Right ventricle myocardium superior (tissue), 1 donor: ENCODE measurements at regions of chr1 and their contacts with region 1.

Region 1: GRCh38 chr1:153677718-153678505 is 576 bp upstream of the NPR1 start:
- DNase-seq: peak; percentile 67
- ATAC-seq: peak; percentile 80

Region 2: DNA sequence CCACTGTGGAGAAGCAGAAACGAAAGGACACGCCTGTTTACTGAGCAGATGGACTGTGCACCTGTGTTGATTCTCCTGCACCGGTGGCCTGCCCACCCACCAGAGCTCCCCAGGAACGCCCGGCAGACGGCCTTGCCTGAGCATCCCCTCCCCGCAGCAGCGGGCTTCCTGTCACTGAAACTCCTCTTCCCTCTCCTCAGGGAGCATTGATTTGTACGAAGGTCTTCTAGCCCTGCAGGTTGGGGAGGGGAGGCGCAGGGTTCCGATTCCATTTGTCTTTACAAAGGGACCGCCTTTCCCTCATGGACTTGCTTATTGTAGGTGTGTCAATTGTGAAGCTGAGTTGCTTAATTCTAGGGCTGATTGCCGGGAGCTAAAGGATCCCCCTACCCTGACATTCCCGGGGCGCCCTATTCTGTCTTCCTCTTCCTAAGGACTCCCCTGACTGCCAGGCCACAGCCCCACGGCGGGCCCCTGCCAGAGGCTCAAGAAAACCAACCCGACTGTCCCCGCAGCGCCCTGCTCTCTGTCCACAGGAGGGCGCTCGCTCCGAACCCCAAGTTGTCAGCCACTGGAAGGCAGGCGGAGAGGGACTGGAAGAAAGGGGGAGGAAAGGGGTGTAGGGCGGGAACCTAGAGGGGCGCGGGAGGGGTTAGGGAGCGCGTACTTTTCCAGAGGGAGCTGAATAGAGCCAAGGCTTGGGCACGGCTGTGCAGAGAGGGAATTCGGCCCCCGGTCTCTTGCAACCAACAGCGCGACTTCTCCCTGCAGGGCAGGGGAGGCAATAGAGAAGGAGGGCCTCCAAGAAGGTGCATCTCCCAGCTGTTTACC is 144.9 kb before region 1 on chr1:
- intact Hi-C with region 1: loop called (anchors 5 kb)
- DNase-seq: peak; percentile 92
- ATAC-seq: peak; percentile 56

Region 3: GRCh38 chr1:153617675-153618074 is 60.2 kb before region 1 on chr1:
- intact Hi-C with region 1: no loop called
- DNase-seq: no peak
- ATAC-seq: no peak

Region 4: GRCh38 chr1:153749408-153750005 is 71.6 kb after region 1 on chr1:
- intact Hi-C with region 1: loop called (anchors 2 kb)
- DNase-seq: peak; percentile 91
- ATAC-seq: peak; percentile 95

Region 5: GRCh38 chr1:153774780-153775457 is 97.0 kb after region 1 on chr1 and contains the start of gene SLC27A3:
- intact Hi-C with region 1: loop called (anchors 5 kb)
- DNase-seq: peak; percentile 90
- ATAC-seq: peak; percentile 83
- total RNA-seq, gene SLC27A3: 12.0 TPM

Region 6: DNA sequence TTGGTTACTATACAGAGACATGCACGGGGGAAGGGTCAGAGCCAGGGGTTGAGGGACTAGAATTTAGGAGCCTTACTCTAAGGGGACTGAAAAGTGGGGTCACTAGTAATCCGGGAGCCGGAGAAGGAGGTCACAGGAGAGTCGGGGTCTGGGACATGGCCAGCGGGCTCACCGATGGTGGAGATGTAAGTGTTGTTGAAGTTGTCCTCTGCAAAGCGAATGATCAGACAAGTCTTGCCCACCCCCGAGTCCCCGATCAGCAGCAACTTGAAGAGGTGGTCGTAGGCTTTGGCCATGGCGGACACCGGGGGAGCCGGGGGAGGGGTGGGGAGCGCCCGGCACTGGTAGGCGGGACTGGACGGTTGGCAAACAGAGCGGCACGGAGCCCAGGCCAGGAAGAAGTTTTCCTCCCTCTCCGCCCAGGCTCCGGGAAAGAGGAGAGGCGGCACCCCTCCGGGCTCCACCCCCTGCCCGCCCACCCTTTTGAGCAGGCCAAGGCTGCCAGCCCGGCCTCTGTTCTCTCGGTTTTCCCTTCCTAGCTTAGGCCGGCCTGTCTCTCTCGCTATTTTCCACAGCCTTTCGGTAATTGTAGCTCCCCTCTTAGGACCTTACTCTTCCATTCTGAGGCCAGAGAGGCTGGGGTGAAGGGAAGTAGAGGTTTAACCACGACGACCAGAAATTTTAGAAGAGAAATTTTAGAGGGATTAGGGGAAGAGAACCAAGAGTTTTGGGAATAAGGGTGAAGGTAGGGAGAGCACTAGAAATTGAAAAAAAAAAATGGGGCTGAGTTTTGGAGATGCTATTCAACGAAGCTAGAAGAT is 308.2 kb after region 1 on chr1 and contains the start of gene RAB13:
- intact Hi-C with region 1: loop called (anchors 5 kb)
- DNase-seq: peak; percentile 89
- ATAC-seq: peak; percentile 86
- total RNA-seq, gene RAB13: 59.9 TPM

Region 7: DNA sequence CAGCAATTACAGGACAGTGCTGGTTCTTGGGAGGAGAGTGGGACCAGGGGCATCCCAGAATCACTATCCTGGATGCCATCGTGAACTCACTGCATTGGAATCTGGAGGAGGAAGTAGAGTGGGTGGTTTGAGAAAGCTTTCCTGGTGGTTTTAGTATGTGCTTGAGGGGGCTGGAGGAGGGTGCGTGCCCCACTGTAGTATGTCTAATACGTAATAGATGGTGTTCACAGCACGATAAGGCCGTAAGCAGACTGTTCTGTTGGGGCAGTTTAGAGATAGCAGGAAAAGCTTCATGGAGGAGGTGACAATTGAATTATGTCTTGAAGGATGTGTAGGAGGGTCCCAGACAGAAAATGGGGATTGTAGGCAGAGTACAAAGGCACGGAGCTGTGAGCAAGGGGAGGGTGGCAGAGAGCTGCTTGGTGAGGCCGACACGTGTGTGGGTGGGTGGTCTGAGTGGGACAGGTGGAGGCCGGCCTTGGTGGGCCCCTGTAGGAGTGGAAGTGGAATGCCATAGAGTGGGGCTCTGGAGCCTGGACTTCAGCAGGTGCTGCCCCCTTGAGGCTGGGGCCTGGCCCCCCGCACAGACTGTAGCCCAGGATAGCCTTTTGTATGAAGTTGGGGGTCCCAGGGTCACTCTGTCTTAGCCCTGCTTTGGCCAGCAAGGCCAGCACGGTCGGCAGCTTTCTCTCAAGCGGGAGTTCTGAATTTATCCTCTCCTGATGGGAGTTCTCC is 764.3 kb after region 1 on chr1:
- intact Hi-C with region 1: no loop called
- DNase-seq: no peak
- ATAC-seq: peak; percentile 32